Activated B cell treated with CpG ODN at 0.5 μM for 24 hours (primary cell): ENCODE measurements at regions of chr7 and their contacts with region 1.

Region 1: GRCh38 chr7:66628361-66629140 is at the start of gene KCTD7:
- DNase-seq: peak; percentile 93
- ATAC-seq: peak; percentile 88
- H3K4me3 Mint-ChIP-seq: peak within 1 kb of the TSS; percentile 92
- H3K27ac Mint-ChIP-seq: peak within 1 kb of the TSS; percentile 91
- H3K4me1 Mint-ChIP-seq: peaks cover 45% of the 10 kb centered on the region
- H3K27me3 Mint-ChIP-seq: no peaks in the 10 kb centered on the region
- CTCF ChIP-seq: no peak
- total RNA-seq, gene KCTD7: 12.8 and 13.2 TPM in 2 replicates

Region 2: DNA sequence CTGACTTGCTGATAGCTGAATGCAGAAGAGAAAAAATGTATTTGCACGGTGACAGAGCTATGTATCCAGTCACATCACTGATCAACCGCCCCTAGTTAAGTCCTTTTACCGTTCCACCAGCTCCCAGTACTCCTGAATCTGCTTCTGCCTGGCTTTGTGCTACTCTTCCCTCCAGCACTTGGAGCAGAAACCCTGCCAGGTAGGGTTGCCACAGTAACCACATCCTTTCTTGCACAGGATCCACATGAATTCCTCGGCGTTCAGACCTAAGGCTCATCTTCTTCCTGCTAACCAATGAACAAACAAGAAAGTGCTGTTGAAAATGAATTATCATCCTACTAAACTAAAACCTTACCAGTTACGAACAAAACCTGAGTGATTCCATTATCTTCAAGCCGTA is 51.9 kb before region 1 on chr7:
- CTCF ChIA-PET with region 1: no interaction called
- POLR2A ChIA-PET with region 1: no interaction called
- intact Hi-C with region 1: no loop called
- DNase-seq: no peak
- ATAC-seq: no peak
- H3K4me3 Mint-ChIP-seq: no peak overlapping the region
- H3K27ac Mint-ChIP-seq: no peak overlapping the region
- H3K4me1 Mint-ChIP-seq: peaks cover 34% of the 10 kb centered on the region
- H3K27me3 Mint-ChIP-seq: no peaks in the 10 kb centered on the region
- CTCF ChIP-seq: no peak

Region 3: GRCh38 chr7:66591799-66592596 is 36.6 kb before region 1 on chr7:
- CTCF ChIA-PET with region 1: no interaction called
- POLR2A ChIA-PET with region 1: interaction called, 9 read pairs
- intact Hi-C with region 1: loop called (anchors 1 kb)
- DNase-seq: peak; percentile 80
- ATAC-seq: peak; percentile 98
- H3K4me3 Mint-ChIP-seq: peak overlapping the region; percentile 98
- H3K27ac Mint-ChIP-seq: peak overlapping the region; percentile 91
- H3K4me1 Mint-ChIP-seq: peaks cover 52% of the 10 kb centered on the region
- H3K27me3 Mint-ChIP-seq: no peaks in the 10 kb centered on the region
- CTCF ChIP-seq: no peak

Region 4: GRCh38 chr7:66669496-66669895 is 40.9 kb after region 1 on chr7:
- CTCF ChIA-PET with region 1: no interaction called
- POLR2A ChIA-PET with region 1: interaction called, 12 read pairs
- intact Hi-C with region 1: no loop called
- DNase-seq: no peak
- ATAC-seq: no peak
- H3K4me3 Mint-ChIP-seq: no peak overlapping the region
- H3K27ac Mint-ChIP-seq: no peak overlapping the region
- H3K4me1 Mint-ChIP-seq: no peaks in the 10 kb centered on the region
- H3K27me3 Mint-ChIP-seq: no peaks in the 10 kb centered on the region
- CTCF ChIP-seq: no peak

Region 5: DNA sequence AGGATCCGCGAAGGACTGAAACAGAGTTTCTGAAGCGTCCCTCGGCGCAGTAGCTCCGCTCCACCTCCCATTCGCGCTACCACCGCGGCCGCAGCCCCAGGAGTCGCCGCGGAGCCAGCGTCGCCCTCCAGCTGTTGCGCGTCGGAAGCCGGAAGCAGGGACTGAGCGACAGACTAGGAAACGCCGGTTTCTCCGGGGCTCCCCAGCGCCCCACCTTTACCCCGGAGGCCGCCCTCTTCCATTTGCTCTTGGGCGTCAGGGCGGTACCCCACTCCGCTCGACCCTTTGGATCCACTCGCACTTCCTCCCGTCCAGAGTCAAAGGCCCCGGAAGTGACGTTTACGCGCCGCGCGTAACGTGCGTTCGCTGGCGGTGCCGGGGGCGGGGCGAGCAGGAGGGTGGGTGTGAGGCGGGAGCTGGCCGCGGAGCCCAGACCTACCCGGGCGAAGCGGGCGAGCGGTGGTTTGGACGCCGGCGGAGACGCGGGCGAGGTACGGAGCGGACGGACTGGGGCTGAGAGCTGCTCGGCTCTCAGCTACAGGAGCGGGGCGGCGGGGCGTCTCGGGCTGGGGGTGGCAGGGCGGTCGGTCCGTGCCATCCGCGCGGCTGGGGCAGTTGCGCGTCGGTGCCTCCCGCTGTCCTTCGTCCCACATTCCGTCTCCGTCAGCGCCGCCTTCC is 111.9 kb after region 1 on chr7 and contains the start of gene RABGEF1:
- CTCF ChIA-PET with region 1: no interaction called
- POLR2A ChIA-PET with region 1: interaction called, 15 read pairs
- intact Hi-C with region 1: loop called (anchors 1 kb)
- DNase-seq: peak; percentile 96
- ATAC-seq: peak; percentile 84
- H3K4me3 Mint-ChIP-seq: peak within 1 kb of the TSS; percentile 93
- H3K27ac Mint-ChIP-seq: peak within 1 kb of the TSS; percentile 94
- H3K4me1 Mint-ChIP-seq: peaks cover 74% of the 10 kb centered on the region
- H3K27me3 Mint-ChIP-seq: no peaks in the 10 kb centered on the region
- CTCF ChIP-seq: no peak
- total RNA-seq, gene RABGEF1: 19.7 and 21.1 TPM in 2 replicates

Region 6: GRCh38 chr7:66920769-66921395 is 292.3 kb after region 1 on chr7 and contains the start of gene TMEM248:
- CTCF ChIA-PET with region 1: no interaction called
- POLR2A ChIA-PET with region 1: interaction called, 4 read pairs
- intact Hi-C with region 1: loop called (anchors 2 kb)
- DNase-seq: peak; percentile 94
- ATAC-seq: peak; percentile 90
- H3K4me3 Mint-ChIP-seq: peak within 1 kb of the TSS; percentile 99
- H3K27ac Mint-ChIP-seq: peak within 1 kb of the TSS; percentile 92
- H3K4me1 Mint-ChIP-seq: peaks cover 34% of the 10 kb centered on the region
- H3K27me3 Mint-ChIP-seq: no peaks in the 10 kb centered on the region
- CTCF ChIP-seq: no peak
- total RNA-seq, gene TMEM248: 89.2 and 95.0 TPM in 2 replicates